PC-3 (cell line): ENCODE measurements at regions of chr16 and their contacts with region 1.

Region 1: DNA sequence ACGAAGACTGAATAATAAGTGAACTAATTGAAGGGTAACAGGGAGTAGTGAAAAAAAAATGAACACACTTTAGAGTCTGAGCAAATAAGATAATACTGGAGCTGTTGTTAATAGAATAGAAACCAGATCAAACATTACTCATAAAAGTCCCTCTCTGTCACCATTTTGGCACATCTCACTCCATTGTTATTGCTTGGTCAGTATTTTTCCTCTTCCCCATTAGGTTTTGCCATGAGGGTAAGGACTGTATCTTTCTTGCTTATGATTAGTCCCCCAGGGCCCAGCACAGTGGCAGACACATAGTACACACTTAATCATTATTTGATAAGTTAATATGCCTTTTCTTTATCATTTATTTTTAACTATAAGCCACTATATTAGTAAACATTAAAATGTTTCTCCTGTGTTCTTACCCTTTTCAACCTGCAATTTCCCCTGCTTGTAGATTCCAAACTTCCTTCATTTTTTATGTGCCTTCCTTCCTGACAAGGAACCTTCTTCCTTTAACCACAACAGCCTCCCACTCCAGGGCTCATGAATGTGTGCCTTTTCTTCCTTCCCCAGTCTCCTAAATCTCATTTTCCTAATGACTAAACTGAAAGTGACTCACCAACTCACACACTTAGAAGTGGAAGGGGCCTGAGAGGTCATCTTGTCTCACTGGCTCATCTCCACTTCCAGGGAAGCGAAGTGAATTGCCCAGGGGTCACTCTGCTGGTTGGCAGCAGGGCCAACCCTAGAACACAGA is 88.2 kb upstream of the HAS3 start:
- DNase-seq: peak; percentile 87
- ATAC-seq: peak; percentile 78
- H3K4me3 ChIP-seq: no peak overlapping the region
- H3K27ac ChIP-seq: peak overlapping the region; percentile 99
- H3K4me1 ChIP-seq: peaks cover 39% of the 10 kb centered on the region
- H3K27me3 ChIP-seq: no peaks in the 10 kb centered on the region
- CTCF ChIP-seq: no peak

Region 2: GRCh38 chr16:68921654-68922053 is 95.6 kb before region 1 on chr16:
- CTCF ChIA-PET with region 1: no interaction called
- POLR2A ChIA-PET with region 1: no interaction called
- intact Hi-C with region 1: loop called (anchors 10 kb)
- DNase-seq: peak; percentile 95
- ATAC-seq: peak; percentile 96
- H3K4me3 ChIP-seq: peak overlapping the region; percentile 36; the same call in 1 of the 2 replicates
- H3K27ac ChIP-seq: peak overlapping the region; percentile 96
- H3K4me1 ChIP-seq: peaks cover 35% of the 10 kb centered on the region
- H3K27me3 ChIP-seq: no peaks in the 10 kb centered on the region
- CTCF ChIP-seq: no peak

Region 3: GRCh38 chr16:68951991-68952877 is 65.0 kb before region 1 on chr16:
- CTCF ChIA-PET with region 1: no interaction called
- POLR2A ChIA-PET with region 1: no interaction called
- intact Hi-C with region 1: loop called (anchors 1 kb)
- DNase-seq: peak; percentile 57
- ATAC-seq: peak; percentile 87
- H3K4me3 ChIP-seq: no peak overlapping the region
- H3K27ac ChIP-seq: peak overlapping the region; percentile 80
- H3K4me1 ChIP-seq: peaks cover 12% of the 10 kb centered on the region
- H3K27me3 ChIP-seq: no peaks in the 10 kb centered on the region
- CTCF ChIP-seq: no peak

Region 4: DNA sequence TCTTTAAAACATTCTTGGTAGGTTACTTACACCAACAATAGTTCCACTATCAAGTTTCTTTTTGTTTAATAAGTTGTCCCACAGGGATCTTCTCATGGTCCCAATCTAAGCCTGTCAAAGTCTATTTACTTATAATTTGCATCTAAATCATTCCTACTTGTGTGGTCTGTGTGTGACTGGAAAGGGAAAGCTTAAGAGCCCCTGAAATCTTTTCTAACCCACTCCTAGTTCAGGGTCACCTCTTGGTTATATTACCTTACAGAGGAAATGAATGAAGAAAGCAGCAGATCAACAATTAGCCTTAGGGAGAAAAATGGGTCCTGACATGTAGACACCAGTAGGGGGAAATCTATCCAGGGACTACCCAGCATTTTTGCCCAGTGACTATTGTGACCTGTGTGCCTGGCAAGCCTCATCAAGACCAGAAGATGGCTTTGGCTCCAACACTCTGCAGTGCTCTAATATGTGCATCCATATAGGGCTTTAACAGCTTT is 22.2 kb before region 1 on chr16:
- CTCF ChIA-PET with region 1: no interaction called
- POLR2A ChIA-PET with region 1: interaction called, 6 read pairs
- intact Hi-C with region 1: loop called (anchors 2 kb)
- DNase-seq: peak; percentile 70
- ATAC-seq: peak; percentile 20; the same call in 1 of the 2 replicates
- H3K4me3 ChIP-seq: no peak overlapping the region
- H3K27ac ChIP-seq: peak overlapping the region; percentile 96
- H3K4me1 ChIP-seq: peaks cover 41% of the 10 kb centered on the region
- H3K27me3 ChIP-seq: no peaks in the 10 kb centered on the region
- CTCF ChIP-seq: peak; percentile 58

Region 5: GRCh38 chr16:69057400-69058378 is 40.5 kb after region 1 on chr16:
- CTCF ChIA-PET with region 1: no interaction called
- POLR2A ChIA-PET with region 1: no interaction called
- intact Hi-C with region 1: loop called (anchors 5 kb)
- DNase-seq: peak; percentile 93
- ATAC-seq: peak; percentile 91
- H3K4me3 ChIP-seq: peak overlapping the region; percentile 21; the same call in 1 of the 2 replicates
- H3K27ac ChIP-seq: peak overlapping the region; percentile 99
- H3K4me1 ChIP-seq: peaks cover 29% of the 10 kb centered on the region
- H3K27me3 ChIP-seq: no peaks in the 10 kb centered on the region
- CTCF ChIP-seq: no peak

Region 6: GRCh38 chr16:69073161-69073669 is 56.0 kb after region 1 on chr16:
- CTCF ChIA-PET with region 1: no interaction called
- POLR2A ChIA-PET with region 1: no interaction called
- intact Hi-C with region 1: loop called (anchors 1 kb)
- DNase-seq: peak; percentile 96
- ATAC-seq: peak; percentile 93
- H3K4me3 ChIP-seq: no peak overlapping the region
- H3K27ac ChIP-seq: peak overlapping the region; percentile 98
- H3K4me1 ChIP-seq: peaks cover 49% of the 10 kb centered on the region
- H3K27me3 ChIP-seq: no peaks in the 10 kb centered on the region
- CTCF ChIP-seq: no peak; the same call in 1 of the 2 replicates

Region 7: GRCh38 chr16:69089091-69089910 is 72.1 kb after region 1 on chr16:
- CTCF ChIA-PET with region 1: no interaction called
- POLR2A ChIA-PET with region 1: no interaction called
- intact Hi-C with region 1: no loop called
- DNase-seq: no peak
- ATAC-seq: no peak
- H3K4me3 ChIP-seq: no peak overlapping the region
- H3K27ac ChIP-seq: no peak overlapping the region
- H3K4me1 ChIP-seq: no peaks in the 10 kb centered on the region
- H3K27me3 ChIP-seq: no peaks in the 10 kb centered on the region
- CTCF ChIP-seq: no peak

Region 8: GRCh38 chr16:69105489-69106361 is 88.5 kb after region 1 on chr16 and contains the start of gene HAS3:
- CTCF ChIA-PET with region 1: no interaction called
- POLR2A ChIA-PET with region 1: no interaction called
- intact Hi-C with region 1: loop called (anchors 2 kb)
- DNase-seq: peak; percentile 75
- ATAC-seq: peak; percentile 67
- H3K4me3 ChIP-seq: peak within 1 kb of the TSS; percentile 98
- H3K27ac ChIP-seq: peak within 1 kb of the TSS; percentile 83
- H3K4me1 ChIP-seq: peaks cover 33% of the 10 kb centered on the region
- H3K27me3 ChIP-seq: no peaks in the 10 kb centered on the region
- CTCF ChIP-seq: peak; percentile 62
- total RNA-seq, gene HAS3: 92.5 and 153 TPM in 2 replicates

Region 9: DNA sequence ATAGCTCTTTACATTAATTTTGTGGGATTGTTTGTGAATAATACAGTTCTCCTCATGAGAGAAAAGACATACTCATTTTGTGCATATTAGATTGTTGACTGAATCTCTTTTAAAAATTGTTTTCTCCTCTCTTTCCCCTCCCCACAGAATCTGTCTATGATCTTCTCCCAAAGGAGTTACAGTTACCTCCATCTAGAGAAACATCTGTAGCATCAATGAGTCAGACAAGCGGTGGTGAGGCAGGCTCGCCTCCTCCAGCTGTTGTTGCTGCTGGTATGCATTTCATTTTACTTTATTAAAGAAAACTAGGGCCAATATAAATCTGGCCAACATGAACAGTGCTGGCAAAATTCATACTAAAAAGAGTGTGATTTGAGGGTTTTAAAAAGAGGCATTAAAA is 609.0 kb after region 1 on chr16:
- CTCF ChIA-PET with region 1: no interaction called
- POLR2A ChIA-PET with region 1: no interaction called
- intact Hi-C with region 1: no loop called
- DNase-seq: no peak
- ATAC-seq: no peak
- H3K4me3 ChIP-seq: no peak overlapping the region
- H3K27ac ChIP-seq: no peak overlapping the region
- H3K4me1 ChIP-seq: no peaks in the 10 kb centered on the region
- H3K27me3 ChIP-seq: no peaks in the 10 kb centered on the region
- CTCF ChIP-seq: no peak